ENCODE measurements at regions of chr4 and their contacts with region 1.

Region 1: GRCh38 chr4:27318743-27319142 is 458.1 kb downstream of the STIM2 start:
- H3K4me3 ChIP-seq: no peak overlapping the region
- H3K27ac ChIP-seq: no peak overlapping the region
- H3K4me1 ChIP-seq: no peaks in the 10 kb centered on the region
- CTCF ChIP-seq: no peak

Region 2: GRCh38 chr4:27048429-27049238 is 270.1 kb before region 1 on chr4:
- CTCF ChIA-PET with region 1: interaction called, 15 read pairs
- POLR2A ChIA-PET with region 1: no interaction called
- H3K4me3 ChIP-seq: no peak overlapping the region
- H3K27ac ChIP-seq: no peak overlapping the region
- H3K4me1 ChIP-seq: no peaks in the 10 kb centered on the region
- CTCF ChIP-seq: no peak

Region 3: GRCh38 chr4:27176400-27176799 is 142.3 kb before region 1 on chr4:
- CTCF ChIA-PET with region 1: interaction called, 11 read pairs
- POLR2A ChIA-PET with region 1: no interaction called
- H3K4me3 ChIP-seq: no peak overlapping the region
- H3K27ac ChIP-seq: no peak overlapping the region
- H3K4me1 ChIP-seq: no peaks in the 10 kb centered on the region
- CTCF ChIP-seq: no peak

Region 4: GRCh38 chr4:27819246-27819645 is 500.5 kb after region 1 on chr4:
- CTCF ChIA-PET with region 1: no interaction called
- POLR2A ChIA-PET with region 1: no interaction called
- H3K4me3 ChIP-seq: no peak overlapping the region
- H3K27ac ChIP-seq: no peak overlapping the region
- H3K4me1 ChIP-seq: no peaks in the 10 kb centered on the region
- CTCF ChIP-seq: no peak

Region 5: DNA sequence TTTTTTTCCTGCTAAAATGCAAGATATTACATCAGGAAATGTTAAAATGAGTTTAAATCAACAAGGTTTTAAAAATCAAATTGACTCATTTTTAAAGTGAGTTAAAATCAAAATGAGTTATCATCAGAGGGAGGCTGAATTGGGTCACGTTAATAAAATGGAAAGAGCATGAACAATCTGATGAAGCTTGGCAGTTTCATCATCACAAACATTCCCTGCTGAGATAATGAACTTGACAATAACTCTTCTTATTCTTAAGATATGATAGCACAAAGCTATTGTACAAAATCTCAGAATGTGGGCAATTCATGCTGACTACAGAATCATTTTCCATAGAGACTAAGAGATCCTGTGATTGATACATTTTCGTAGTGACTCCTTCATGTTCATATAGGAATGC is 628.6 kb after region 1 on chr4:
- CTCF ChIA-PET with region 1: no interaction called
- POLR2A ChIA-PET with region 1: no interaction called
- H3K4me3 ChIP-seq: no peak overlapping the region
- H3K27ac ChIP-seq: no peak overlapping the region
- H3K4me1 ChIP-seq: no peaks in the 10 kb centered on the region
- CTCF ChIP-seq: no peak

Measured in HEK293 (cell line).